Activated naive CD4-positive, alpha-beta T cell treated with anti-CD3 and anti-CD28 coated beads for 36 hours (primary cell): ENCODE measurements at regions of chr4 and their contacts with region 1.

Region 1: GRCh38 chr4:38034986-38035882 is 75.0 kb downstream of the PTTG2 start:
- DNase-seq: peak; percentile 49
- H3K4me3 Mint-ChIP-seq: no peak overlapping the region
- H3K27ac Mint-ChIP-seq: no peak overlapping the region
- H3K4me1 Mint-ChIP-seq: no peaks in the 10 kb centered on the region
- H3K27me3 Mint-ChIP-seq: no peaks in the 10 kb centered on the region

Region 2: GRCh38 chr4:37726666-37727065 is 308.6 kb before region 1 on chr4:
- CTCF ChIA-PET with region 1: no interaction called
- intact Hi-C with region 1: no loop called
- DNase-seq: no peak
- H3K4me3 Mint-ChIP-seq: no peak overlapping the region
- H3K27ac Mint-ChIP-seq: no peak overlapping the region
- H3K4me1 Mint-ChIP-seq: peaks cover 15% of the 10 kb centered on the region
- H3K27me3 Mint-ChIP-seq: no peaks in the 10 kb centered on the region

Region 3: DNA sequence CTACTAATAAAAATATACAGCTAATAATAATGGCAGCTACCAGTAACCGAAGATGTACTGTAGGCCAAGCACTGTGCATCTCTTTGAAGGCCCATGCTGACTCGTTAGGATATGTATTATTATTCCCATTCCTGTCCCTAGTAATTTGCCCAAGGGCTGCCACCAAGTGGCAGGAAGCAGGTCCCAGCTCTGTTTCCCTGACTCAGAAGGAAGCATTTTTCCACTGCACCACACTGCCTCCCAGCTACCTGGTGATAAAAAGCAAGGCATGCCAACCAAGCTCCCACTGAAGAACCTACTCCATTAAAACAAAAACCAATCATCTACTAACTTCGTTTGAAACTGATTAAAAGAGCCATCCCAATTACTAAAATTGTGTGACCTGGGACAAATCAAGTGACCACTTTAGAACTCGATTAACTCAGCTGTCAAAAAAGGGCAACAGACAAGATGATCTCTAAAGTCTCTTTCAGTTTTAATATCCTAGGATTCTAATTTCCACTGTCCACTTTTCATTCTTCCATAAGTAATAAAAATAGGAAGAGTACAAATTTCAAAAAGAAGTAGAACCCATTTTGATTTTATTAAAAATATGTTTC is 233.1 kb before region 1 on chr4:
- CTCF ChIA-PET with region 1: interaction called, 28 read pairs
- intact Hi-C with region 1: loop called (anchors 1 kb)
- DNase-seq: peak; percentile 46
- H3K4me3 Mint-ChIP-seq: no peak overlapping the region
- H3K27ac Mint-ChIP-seq: no peak overlapping the region
- H3K4me1 Mint-ChIP-seq: no peaks in the 10 kb centered on the region
- H3K27me3 Mint-ChIP-seq: no peaks in the 10 kb centered on the region

Region 4: GRCh38 chr4:37977471-37978247 is 57.6 kb before region 1 on chr4:
- CTCF ChIA-PET with region 1: interaction called, 6 read pairs
- intact Hi-C with region 1: loop called (anchors 1 kb)
- DNase-seq: peak; percentile 83
- H3K4me3 Mint-ChIP-seq: peak overlapping the region; percentile 77
- H3K27ac Mint-ChIP-seq: peak overlapping the region; percentile 26
- H3K4me1 Mint-ChIP-seq: peaks cover 27% of the 10 kb centered on the region
- H3K27me3 Mint-ChIP-seq: no peaks in the 10 kb centered on the region